ENCODE measurements at regions of chr10 and their contacts with region 1.

Region 1: GRCh38 chr10:89954787-89955566 is 253.6 kb downstream of the KIF20B start:
- DNase-seq: no peak
- ATAC-seq: no peak
- H3K4me3 ChIP-seq: no peak overlapping the region
- H3K27ac ChIP-seq: no peak overlapping the region
- H3K4me1 ChIP-seq: no peaks in the 10 kb centered on the region
- H3K27me3 ChIP-seq: no peaks in the 10 kb centered on the region

Region 2: DNA sequence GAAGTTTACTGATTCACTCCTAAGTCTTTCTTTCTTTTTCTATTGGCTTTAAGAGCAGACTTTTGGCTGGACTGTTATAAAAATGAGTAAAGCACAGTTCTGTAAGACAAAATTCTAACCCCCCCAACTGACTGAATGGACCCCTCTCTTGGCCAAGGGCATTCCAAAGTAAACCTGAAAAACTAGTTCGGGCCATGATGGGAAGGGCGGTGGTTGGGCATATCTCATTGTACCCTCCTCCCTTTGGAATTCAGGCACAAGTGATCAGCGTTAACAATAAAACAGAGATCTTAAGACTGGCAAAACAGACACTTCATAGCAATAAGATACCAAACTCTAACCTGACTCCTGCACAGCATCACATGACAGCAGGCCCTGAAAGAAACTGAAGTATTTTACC is 259.7 kb before region 1 on chr10:
- intact Hi-C with region 1: no loop called
- DNase-seq: no peak
- ATAC-seq: no peak
- H3K4me3 ChIP-seq: no peak overlapping the region
- H3K27ac ChIP-seq: no peak overlapping the region
- H3K4me1 ChIP-seq: peaks cover 2% of the 10 kb centered on the region
- H3K27me3 ChIP-seq: no peaks in the 10 kb centered on the region

Region 3: DNA sequence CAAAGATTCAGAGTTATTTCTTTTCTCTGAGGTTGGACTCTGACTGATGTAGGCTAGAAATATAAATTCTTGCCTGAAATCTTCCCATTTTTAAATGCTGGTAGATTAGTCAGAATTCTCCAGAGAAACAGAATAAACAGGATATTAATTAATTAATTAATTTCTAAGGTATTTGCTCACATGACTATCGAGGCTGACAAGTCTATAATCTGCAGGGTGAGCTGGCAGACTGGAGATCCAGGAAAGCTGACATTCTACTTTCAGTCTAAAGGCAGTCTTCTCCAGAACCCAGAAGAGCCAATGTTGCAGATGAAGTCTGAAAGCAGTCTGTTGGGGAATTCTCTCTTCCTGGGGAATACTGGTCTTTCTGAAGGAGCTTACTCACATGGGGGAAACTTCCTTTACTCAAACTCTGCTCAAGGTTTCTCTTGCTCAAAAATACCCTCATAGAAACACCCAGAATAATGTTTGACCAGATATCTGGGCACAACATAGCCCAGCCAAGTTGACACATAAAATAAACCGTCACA is 63.9 kb before region 1 on chr10:
- intact Hi-C with region 1: no loop called
- DNase-seq: no peak
- ATAC-seq: no peak
- H3K4me3 ChIP-seq: no peak overlapping the region
- H3K27ac ChIP-seq: no peak overlapping the region
- H3K4me1 ChIP-seq: no peaks in the 10 kb centered on the region
- H3K27me3 ChIP-seq: no peaks in the 10 kb centered on the region

Region 4: DNA sequence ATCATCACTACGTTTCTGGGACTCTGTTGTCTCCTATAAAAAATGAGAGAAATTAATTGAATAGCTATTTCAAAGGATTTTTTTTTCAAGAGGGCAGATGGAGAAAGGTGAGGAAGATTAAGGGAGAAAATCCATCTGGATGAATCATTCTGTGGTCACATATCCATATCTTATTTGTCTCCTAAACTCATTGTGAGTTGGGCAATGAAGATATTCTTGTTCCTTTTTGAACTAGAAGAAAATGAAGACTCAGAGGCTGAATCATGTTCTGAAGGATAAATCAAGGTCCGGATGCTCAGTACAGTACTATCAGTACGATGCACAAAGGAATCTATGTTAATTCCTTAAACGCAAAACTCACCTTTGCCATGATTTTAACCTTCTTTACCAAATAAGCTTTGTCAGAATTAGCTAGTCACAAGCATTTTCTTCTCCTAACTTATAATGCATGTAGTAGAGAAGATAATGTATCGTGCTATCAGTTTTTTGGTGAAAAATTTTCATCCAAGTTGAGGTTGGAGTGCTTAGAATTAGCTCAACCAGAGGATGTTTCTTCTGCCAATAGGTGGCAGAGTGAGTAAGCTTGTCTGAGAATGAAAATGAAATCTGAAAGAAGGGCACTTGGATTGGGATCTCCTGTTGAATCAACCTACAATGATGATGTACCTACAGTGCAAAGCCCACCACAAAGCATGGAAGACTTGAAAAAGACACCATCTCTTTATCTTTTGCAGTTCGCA is 193.3 kb after region 1 on chr10:
- intact Hi-C with region 1: loop called in 1 of 4 experiments (anchors 10 kb)
- DNase-seq: no peak
- ATAC-seq: no peak
- H3K4me3 ChIP-seq: no peak overlapping the region
- H3K27ac ChIP-seq: no peak overlapping the region
- H3K4me1 ChIP-seq: no peaks in the 10 kb centered on the region
- H3K27me3 ChIP-seq: no peaks in the 10 kb centered on the region